Activated CD4-positive, alpha-beta memory T cell treated with anti-CD3 and anti-CD28 coated beads for 36 hours (primary cell): ENCODE measurements at regions of chr10 and their contacts with region 1.

Region 1: GRCh38 chr10:78047314-78047891 is 13.7 kb downstream of the RPS24 start:
- DNase-seq: peak; percentile 86
- H3K4me3 Mint-ChIP-seq: no peak overlapping the region
- H3K27ac Mint-ChIP-seq: no peak overlapping the region
- H3K4me1 Mint-ChIP-seq: peaks cover 28% of the 10 kb centered on the region
- H3K27me3 Mint-ChIP-seq: no peaks in the 10 kb centered on the region

Region 2: GRCh38 chr10:77983384-77984341 is 63.7 kb before region 1 on chr10:
- CTCF ChIA-PET with region 1: no interaction called
- POLR2A ChIA-PET with region 1: no interaction called
- intact Hi-C with region 1: no loop called
- DNase-seq: no peak
- H3K4me3 Mint-ChIP-seq: no peak overlapping the region
- H3K27ac Mint-ChIP-seq: no peak overlapping the region
- H3K4me1 Mint-ChIP-seq: no peaks in the 10 kb centered on the region
- H3K27me3 Mint-ChIP-seq: no peaks in the 10 kb centered on the region

Region 3: DNA sequence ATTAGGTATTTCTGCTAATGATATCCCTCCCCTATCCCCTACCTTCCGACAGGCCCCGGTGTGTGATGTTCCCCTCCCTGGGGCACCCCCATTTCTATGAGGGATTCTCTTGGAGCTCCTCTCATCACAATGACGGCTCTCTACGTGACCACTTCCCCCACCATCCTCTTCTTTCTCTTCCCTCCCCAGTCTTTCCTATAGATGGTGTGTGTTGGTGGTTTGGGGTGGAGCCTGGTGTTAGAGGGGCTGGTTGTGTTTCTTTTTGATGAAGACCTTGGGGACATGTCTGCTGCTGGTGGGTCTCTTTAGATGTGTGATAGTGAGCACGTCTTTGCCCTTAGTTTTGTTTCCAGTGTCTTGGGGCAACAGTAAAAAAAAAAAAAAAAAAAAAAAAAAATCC is 14.9 kb after region 1 on chr10:
- CTCF ChIA-PET with region 1: interaction called, 16 read pairs
- POLR2A ChIA-PET with region 1: no interaction called
- intact Hi-C with region 1: no loop called
- DNase-seq: no peak
- H3K4me3 Mint-ChIP-seq: no peak overlapping the region
- H3K27ac Mint-ChIP-seq: no peak overlapping the region
- H3K4me1 Mint-ChIP-seq: no peaks in the 10 kb centered on the region
- H3K27me3 Mint-ChIP-seq: peaks cover 7% of the 10 kb centered on the region

Region 4: DNA sequence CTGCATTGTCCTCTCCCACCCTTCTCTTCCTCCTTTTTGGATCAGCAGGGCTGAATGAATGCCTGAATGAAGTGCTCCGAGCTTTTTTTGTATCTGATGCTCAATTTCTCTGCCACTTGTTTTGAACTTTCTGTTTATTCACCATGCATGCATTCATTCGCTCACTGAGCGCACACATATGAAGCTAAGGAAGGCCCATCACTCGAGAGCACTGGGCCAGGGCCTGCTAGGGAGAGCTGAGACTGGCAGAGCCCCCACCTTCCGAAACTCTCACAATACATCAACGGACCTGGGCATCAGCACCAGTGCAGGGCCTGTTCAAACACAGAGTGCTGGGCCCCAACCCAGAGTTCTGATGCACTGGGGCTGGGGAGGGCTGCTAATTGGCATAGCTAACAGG is 32.0 kb after region 1 on chr10:
- CTCF ChIA-PET with region 1: no interaction called
- POLR2A ChIA-PET with region 1: no interaction called
- intact Hi-C with region 1: no loop called
- DNase-seq: no peak
- H3K4me3 Mint-ChIP-seq: no peak overlapping the region
- H3K27ac Mint-ChIP-seq: no peak overlapping the region
- H3K4me1 Mint-ChIP-seq: no peaks in the 10 kb centered on the region
- H3K27me3 Mint-ChIP-seq: peaks cover 8% of the 10 kb centered on the region

Region 5: GRCh38 chr10:78437998-78438906 is 390.8 kb after region 1 on chr10:
- CTCF ChIA-PET with region 1: interaction called, 5 read pairs
- POLR2A ChIA-PET with region 1: no interaction called
- intact Hi-C with region 1: loop called (anchors 1 kb)
- DNase-seq: peak; percentile 55
- H3K4me3 Mint-ChIP-seq: no peak overlapping the region
- H3K27ac Mint-ChIP-seq: no peak overlapping the region
- H3K4me1 Mint-ChIP-seq: peaks cover 3% of the 10 kb centered on the region
- H3K27me3 Mint-ChIP-seq: peaks cover 8% of the 10 kb centered on the region

Region 6: DNA sequence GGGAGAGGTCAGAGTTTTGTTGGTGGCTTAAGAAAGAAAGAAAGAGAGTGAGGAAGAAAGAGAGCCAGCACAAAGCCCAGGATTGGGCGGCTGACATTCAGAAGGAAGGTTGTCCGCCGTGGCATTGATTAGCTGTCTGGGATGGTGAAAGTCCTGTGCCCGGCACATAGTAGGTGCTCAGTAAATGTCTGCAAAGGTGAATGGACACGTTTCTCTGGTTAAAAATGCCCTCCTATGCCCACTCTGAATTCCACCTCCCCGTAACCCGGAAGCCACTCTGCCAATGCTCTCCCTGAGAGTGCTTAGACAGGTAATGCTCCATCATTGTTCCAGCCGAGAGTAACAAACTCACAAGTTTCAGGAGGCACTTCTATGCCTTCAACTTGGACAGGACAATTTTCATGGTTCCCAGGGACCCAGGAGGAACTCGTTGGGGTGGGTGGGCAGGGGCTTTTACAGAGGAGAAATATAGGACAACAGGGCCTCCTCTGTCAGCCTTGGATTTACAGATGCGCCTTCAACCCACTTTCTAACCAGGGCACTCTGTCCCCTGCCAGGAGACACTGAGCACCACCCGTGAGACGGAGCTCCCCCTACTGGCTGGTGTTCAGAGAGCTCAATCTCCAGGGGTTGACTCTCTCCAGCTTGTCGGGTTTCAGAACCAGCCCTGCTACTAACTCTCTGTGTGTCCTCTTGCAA is 609.9 kb after region 1 on chr10:
- CTCF ChIA-PET with region 1: interaction called, 25 read pairs
- POLR2A ChIA-PET with region 1: no interaction called
- intact Hi-C with region 1: loop called (anchors 1 kb)
- DNase-seq: peak; percentile 81
- H3K4me3 Mint-ChIP-seq: no peak overlapping the region
- H3K27ac Mint-ChIP-seq: no peak overlapping the region
- H3K4me1 Mint-ChIP-seq: no peaks in the 10 kb centered on the region
- H3K27me3 Mint-ChIP-seq: peaks cover 8% of the 10 kb centered on the region

Region 7: GRCh38 chr10:78763651-78764311 is 716.4 kb after region 1 on chr10:
- CTCF ChIA-PET with region 1: no interaction called
- POLR2A ChIA-PET with region 1: no interaction called
- intact Hi-C with region 1: loop called (anchors 10 kb)
- DNase-seq: peak; percentile 85
- H3K4me3 Mint-ChIP-seq: no peak overlapping the region
- H3K27ac Mint-ChIP-seq: peak overlapping the region; percentile 90
- H3K4me1 Mint-ChIP-seq: peaks cover 30% of the 10 kb centered on the region
- H3K27me3 Mint-ChIP-seq: peaks cover 3% of the 10 kb centered on the region

Region 8: GRCh38 chr10:78777466-78777865 is 730.1 kb after region 1 on chr10:
- CTCF ChIA-PET with region 1: no interaction called
- POLR2A ChIA-PET with region 1: no interaction called
- intact Hi-C with region 1: no loop called
- DNase-seq: no peak
- H3K4me3 Mint-ChIP-seq: no peak overlapping the region
- H3K27ac Mint-ChIP-seq: no peak overlapping the region
- H3K4me1 Mint-ChIP-seq: no peaks in the 10 kb centered on the region
- H3K27me3 Mint-ChIP-seq: no peaks in the 10 kb centered on the region